Activated naive CD4-positive, alpha-beta T cell treated with anti-CD3 and anti-CD28 coated beads for 36 hours (primary cell): ENCODE measurements at regions of chr5 and their contacts with region 1.

Region 1: GRCh38 chr5:158406884-158407823 is 548.2 kb upstream of the CLINT1 start:
- DNase-seq: no peak
- H3K4me3 Mint-ChIP-seq: no peak overlapping the region
- H3K27ac Mint-ChIP-seq: no peak overlapping the region
- H3K4me1 Mint-ChIP-seq: peaks cover 8% of the 10 kb centered on the region
- H3K27me3 Mint-ChIP-seq: no peaks in the 10 kb centered on the region

Region 2: GRCh38 chr5:158140120-158140731 is 266.9 kb before region 1 on chr5:
- CTCF ChIA-PET with region 1: no interaction called
- intact Hi-C with region 1: no loop called
- DNase-seq: no peak
- H3K4me3 Mint-ChIP-seq: no peak overlapping the region
- H3K27ac Mint-ChIP-seq: no peak overlapping the region
- H3K4me1 Mint-ChIP-seq: no peaks in the 10 kb centered on the region
- H3K27me3 Mint-ChIP-seq: no peaks in the 10 kb centered on the region

Region 3: GRCh38 chr5:158344376-158344775 is 62.8 kb before region 1 on chr5:
- CTCF ChIA-PET with region 1: no interaction called
- intact Hi-C with region 1: no loop called
- DNase-seq: no peak
- H3K4me3 Mint-ChIP-seq: no peak overlapping the region
- H3K27ac Mint-ChIP-seq: no peak overlapping the region
- H3K4me1 Mint-ChIP-seq: no peaks in the 10 kb centered on the region
- H3K27me3 Mint-ChIP-seq: no peaks in the 10 kb centered on the region

Region 4: DNA sequence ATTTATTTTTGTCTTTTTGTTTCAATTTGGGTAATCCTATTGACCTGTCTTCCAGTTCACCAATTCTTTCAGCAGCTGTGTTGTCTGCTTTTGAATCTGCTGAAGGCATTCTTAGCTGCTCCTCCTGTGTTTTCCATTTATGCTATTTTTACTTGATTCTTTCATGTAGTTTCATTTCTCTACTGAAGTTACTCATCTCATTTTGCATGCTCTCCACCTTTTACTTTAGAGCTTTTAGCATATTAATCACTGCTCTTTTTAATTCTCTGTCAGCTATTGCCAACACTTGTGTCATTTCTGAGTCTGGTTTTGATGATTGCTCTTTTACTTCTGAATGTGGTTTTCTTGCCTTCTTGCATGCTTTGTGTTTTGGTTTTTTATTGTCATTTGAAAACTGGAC is 52.2 kb before region 1 on chr5:
- CTCF ChIA-PET with region 1: no interaction called
- intact Hi-C with region 1: loop called (anchors 1 kb)
- DNase-seq: no peak
- H3K4me3 Mint-ChIP-seq: no peak overlapping the region
- H3K27ac Mint-ChIP-seq: peak overlapping the region; percentile 46
- H3K4me1 Mint-ChIP-seq: peaks cover 16% of the 10 kb centered on the region
- H3K27me3 Mint-ChIP-seq: no peaks in the 10 kb centered on the region

Region 5: GRCh38 chr5:158435161-158435616 is 28.0 kb after region 1 on chr5:
- CTCF ChIA-PET with region 1: no interaction called
- intact Hi-C with region 1: loop called (anchors 2 kb)
- DNase-seq: peak; percentile 50
- H3K4me3 Mint-ChIP-seq: no peak overlapping the region
- H3K27ac Mint-ChIP-seq: peak overlapping the region; percentile 57
- H3K4me1 Mint-ChIP-seq: peaks cover 62% of the 10 kb centered on the region
- H3K27me3 Mint-ChIP-seq: no peaks in the 10 kb centered on the region

Region 6: GRCh38 chr5:158463938-158464337 is 56.8 kb after region 1 on chr5:
- CTCF ChIA-PET with region 1: no interaction called
- intact Hi-C with region 1: no loop called
- DNase-seq: peak; percentile 46
- H3K4me3 Mint-ChIP-seq: no peak overlapping the region
- H3K27ac Mint-ChIP-seq: peak overlapping the region; percentile 28
- H3K4me1 Mint-ChIP-seq: peaks cover 12% of the 10 kb centered on the region
- H3K27me3 Mint-ChIP-seq: no peaks in the 10 kb centered on the region

Region 7: DNA sequence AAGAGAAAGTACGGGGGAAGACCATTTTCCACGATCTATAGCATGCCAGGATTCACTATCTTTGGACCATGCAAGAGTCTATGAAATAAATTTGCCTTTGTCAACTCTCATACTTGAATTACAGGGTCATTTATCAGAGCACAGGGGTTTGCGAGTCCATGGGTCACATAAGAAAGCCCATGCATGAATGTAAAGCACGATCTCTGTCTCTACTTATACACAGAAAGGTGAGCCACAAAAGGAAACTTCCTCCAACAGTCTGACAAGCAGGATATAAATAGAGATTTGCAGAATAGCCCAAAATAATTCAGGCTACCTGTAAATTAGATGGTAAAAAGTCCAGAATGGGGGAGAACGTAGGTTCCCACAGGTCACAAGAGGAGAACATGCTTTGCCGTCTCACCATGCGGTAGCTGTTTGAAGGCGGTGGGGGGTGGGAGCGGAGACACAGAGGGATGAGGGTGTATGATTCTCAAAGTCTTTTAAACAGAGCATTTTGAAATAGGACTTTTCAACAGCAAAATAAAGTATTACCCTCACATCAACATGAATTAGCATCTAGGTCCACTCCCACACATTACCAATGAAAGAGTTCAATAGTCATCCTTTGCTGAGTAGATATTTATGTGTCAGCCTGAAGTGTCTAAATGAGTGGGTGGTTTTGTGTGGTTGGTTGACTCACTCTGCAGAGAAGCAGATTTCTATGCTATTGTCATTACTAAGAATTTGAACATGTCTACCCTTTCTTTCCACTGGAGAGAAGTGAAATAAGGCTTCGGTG is 412.9 kb after region 1 on chr5:
- CTCF ChIA-PET with region 1: no interaction called
- intact Hi-C with region 1: loop called (anchors 2 kb)
- DNase-seq: peak; percentile 42
- H3K4me3 Mint-ChIP-seq: no peak overlapping the region
- H3K27ac Mint-ChIP-seq: no peak overlapping the region
- H3K4me1 Mint-ChIP-seq: peaks cover 28% of the 10 kb centered on the region
- H3K27me3 Mint-ChIP-seq: peaks cover 2% of the 10 kb centered on the region